Activated naive CD4-positive, alpha-beta T cell treated with anti-CD3 and anti-CD28 coated beads for 36 hours (primary cell): ENCODE measurements at regions of chr4 and their contacts with region 1.

Region 1: DNA sequence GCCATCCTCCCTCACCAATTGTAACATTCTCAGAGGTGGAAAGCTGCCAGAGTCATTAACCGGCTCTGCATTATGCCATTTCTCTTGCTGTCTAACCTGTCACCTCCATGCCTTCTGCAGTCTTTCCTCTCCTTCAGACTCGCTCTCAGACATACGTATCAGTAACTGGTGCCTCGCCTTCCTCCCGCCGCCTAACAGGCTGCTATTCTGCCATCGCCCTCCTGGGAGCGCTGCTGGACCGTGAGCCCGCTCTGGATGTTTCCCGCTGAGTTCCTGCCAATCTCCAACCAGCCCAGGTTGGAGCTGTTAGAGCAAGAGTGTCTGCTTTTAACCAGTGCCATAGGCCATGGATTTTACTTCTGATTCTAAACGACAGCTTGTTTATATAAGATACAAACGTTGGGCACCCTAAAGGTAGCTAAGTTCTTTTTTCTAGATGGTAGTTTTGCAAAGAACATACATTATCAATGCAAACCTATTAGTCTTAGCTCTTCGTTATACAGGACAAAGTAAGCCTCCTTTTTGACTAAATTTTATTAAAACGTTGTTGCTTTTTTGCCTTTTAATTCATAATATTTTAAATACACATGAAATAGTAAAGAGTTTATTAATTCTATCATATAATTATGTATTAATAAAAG is 59.5 kb upstream of the NEIL3 start:
- DNase-seq: peak; percentile 77
- H3K4me3 Mint-ChIP-seq: no peak overlapping the region
- H3K27ac Mint-ChIP-seq: no peak overlapping the region
- H3K4me1 Mint-ChIP-seq: peaks cover 9% of the 10 kb centered on the region
- H3K27me3 Mint-ChIP-seq: peaks cover 8% of the 10 kb centered on the region

Region 2: DNA sequence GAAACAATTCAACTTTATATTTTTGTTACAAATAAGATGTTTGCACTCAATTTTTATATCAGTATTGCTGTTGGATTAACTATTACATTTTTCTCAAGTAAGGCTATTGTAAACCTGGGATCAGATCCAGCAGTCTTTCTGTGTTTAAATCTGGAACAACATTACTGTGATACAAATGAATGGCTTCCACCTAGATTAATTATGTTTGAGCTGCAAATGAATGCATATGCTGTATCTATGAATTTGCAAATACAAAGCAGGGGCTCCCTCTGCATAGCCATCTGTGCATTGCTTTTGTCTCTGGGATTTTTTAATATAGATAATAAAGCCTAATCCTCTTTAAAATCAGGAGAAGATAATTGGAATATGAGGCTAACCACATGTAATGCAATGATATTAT is 10.3 kb before region 1 on chr4:
- CTCF ChIA-PET with region 1: interaction called, 10 read pairs
- intact Hi-C with region 1: no loop called
- DNase-seq: no peak
- H3K4me3 Mint-ChIP-seq: no peak overlapping the region
- H3K27ac Mint-ChIP-seq: no peak overlapping the region
- H3K4me1 Mint-ChIP-seq: no peaks in the 10 kb centered on the region
- H3K27me3 Mint-ChIP-seq: no peaks in the 10 kb centered on the region

Region 3: GRCh38 chr4:177339477-177340374 is 89.5 kb after region 1 on chr4:
- CTCF ChIA-PET with region 1: interaction called, 29 read pairs
- intact Hi-C with region 1: loop called (anchors 1 kb)
- DNase-seq: no peak
- H3K4me3 Mint-ChIP-seq: no peak overlapping the region
- H3K27ac Mint-ChIP-seq: no peak overlapping the region
- H3K4me1 Mint-ChIP-seq: peaks cover 5% of the 10 kb centered on the region
- H3K27me3 Mint-ChIP-seq: no peaks in the 10 kb centered on the region

Region 4: GRCh38 chr4:177546745-177547144 is 296.6 kb after region 1 on chr4:
- CTCF ChIA-PET with region 1: interaction called, 8 read pairs
- intact Hi-C with region 1: loop called (anchors 1 kb)
- DNase-seq: no peak
- H3K4me3 Mint-ChIP-seq: no peak overlapping the region
- H3K27ac Mint-ChIP-seq: no peak overlapping the region
- H3K4me1 Mint-ChIP-seq: no peaks in the 10 kb centered on the region
- H3K27me3 Mint-ChIP-seq: no peaks in the 10 kb centered on the region